Activated naive CD4-positive, alpha-beta T cell treated with anti-CD3 and anti-CD28 coated beads for 36 hours (primary cell): ENCODE measurements at regions of chr11 and their contacts with region 1.

Region 1: GRCh38 chr11:304915-305843 is 2.4 kb upstream of the IFITM2 start:
- DNase-seq: peak; percentile 85
- H3K4me3 Mint-ChIP-seq: no peak overlapping the region
- H3K27ac Mint-ChIP-seq: no peak overlapping the region
- H3K4me1 Mint-ChIP-seq: peaks cover 38% of the 10 kb centered on the region
- H3K27me3 Mint-ChIP-seq: peaks cover 8% of the 10 kb centered on the region

Region 2: GRCh38 chr11:288328-289144 is 16.6 kb before region 1 on chr11 and contains the start of gene PGGHG:
- CTCF ChIA-PET with region 1: interaction called, 12 read pairs
- intact Hi-C with region 1: loop called (anchors 2 kb)
- DNase-seq: peak; percentile 36
- H3K4me3 Mint-ChIP-seq: peak within 1 kb of the TSS; percentile 98
- H3K27ac Mint-ChIP-seq: peak within 1 kb of the TSS; percentile 97
- H3K4me1 Mint-ChIP-seq: peaks cover 38% of the 10 kb centered on the region
- H3K27me3 Mint-ChIP-seq: peaks cover 2% of the 10 kb centered on the region
- total RNA-seq, gene PGGHG: 99.6 to 101 TPM

Region 3: DNA sequence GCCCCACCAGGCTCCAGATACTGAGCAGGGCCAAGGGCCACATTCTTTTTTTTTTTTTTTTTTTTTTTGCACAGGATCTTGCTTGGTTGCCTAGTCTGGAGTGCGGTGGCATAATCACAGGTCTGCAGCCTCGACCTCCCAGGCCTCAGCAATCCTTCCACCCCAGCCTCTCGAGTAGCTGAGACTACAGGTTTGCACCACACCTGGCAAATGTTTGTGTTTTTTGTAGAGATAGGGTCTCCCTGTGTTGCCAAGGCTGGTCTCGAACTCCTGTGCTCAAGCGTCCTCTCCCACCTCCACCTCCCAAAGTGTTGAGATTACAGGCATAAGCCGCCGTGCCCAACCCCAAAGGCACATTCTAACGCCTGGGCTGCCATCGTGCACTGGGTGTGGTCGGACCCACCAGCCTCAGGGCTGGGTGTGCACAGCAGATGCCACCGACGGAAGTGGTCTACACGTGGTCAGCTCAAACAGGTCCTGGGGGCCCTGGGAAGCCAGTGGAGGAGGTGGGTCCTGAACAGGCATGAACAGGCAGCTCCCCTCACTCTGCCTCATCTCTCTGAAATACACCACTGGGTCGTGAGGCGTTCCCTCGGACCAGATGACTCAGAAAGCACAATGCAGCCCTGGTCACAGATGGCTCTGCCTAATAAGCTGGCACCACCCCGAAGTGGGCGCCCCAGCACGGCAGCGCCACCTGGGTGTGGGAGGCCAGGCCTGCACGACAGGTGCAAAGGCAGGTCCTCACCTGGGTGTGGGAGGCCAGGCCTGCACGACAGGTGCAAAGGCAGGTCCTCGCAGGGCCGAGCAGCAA is 59.0 kb after region 1 on chr11:
- CTCF ChIA-PET with region 1: interaction called, 81 read pairs
- intact Hi-C with region 1: no loop called
- DNase-seq: peak; percentile 57
- H3K4me3 Mint-ChIP-seq: no peak overlapping the region
- H3K27ac Mint-ChIP-seq: no peak overlapping the region
- H3K4me1 Mint-ChIP-seq: peaks cover 11% of the 10 kb centered on the region
- H3K27me3 Mint-ChIP-seq: peaks cover 17% of the 10 kb centered on the region